ENCODE measurements at regions of chr16 and their contacts with region 1.

Region 1: GRCh38 chr16:23423496-23424049 is 29.4 kb downstream of the COG7 start:
- DNase-seq: peak; percentile 97
- H3K4me3 ChIP-seq: no peak overlapping the region
- H3K27ac ChIP-seq: peak overlapping the region; percentile 91
- H3K4me1 ChIP-seq: peaks cover 20% of the 10 kb centered on the region
- H3K27me3 ChIP-seq: no peaks in the 10 kb centered on the region
- CTCF ChIP-seq: no peak

Region 2: DNA sequence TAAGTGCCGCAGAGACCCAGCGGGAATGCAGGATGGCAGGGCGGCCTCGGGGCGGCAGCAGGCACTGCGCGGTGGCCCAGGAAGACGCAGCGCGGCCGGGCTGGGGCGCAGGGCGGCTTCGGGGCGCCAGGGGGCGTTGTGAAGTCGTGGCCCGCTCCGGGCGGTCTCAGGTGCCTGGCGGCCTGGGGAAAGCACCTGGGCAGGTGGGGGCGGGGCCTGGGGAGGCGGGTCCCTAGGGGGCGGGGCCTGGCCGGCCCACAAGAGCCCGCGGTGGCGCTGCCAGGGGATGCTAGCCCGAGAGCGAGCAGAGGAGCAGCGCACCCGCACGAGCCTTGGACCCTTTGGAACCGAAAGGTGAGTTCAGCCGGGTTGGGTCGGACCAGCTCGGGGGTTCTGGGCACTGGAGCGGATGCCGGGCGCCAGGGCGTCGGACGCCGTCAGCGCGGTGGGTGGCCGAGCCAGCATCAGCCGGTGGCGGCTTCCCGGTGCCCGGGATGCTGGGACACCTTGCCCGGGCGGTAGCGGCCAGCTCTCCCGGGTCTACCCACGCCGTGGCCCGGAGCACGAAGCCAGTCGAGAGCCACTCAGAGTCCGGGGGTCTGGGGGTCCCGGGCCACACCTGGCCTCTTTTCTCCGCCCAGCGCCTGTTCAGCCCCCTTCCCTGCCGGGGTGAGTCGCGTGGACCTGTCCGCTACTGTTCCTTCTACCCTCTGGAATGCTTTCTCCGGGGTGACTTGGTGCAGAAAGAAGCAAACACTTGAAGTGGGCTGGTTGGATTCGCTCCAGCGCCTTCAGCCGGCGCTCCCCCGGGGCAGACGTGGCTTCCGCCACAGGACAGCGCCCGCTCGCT is 240.9 kb before region 1 on chr16 and contains the start of gene SCNN1G:
- CTCF ChIA-PET with region 1: no interaction called
- dilution Hi-C with region 1: no loop called
- in situ Hi-C with region 1: no loop called
- intact Hi-C with region 1: loop called (anchors 2 kb)
- DNase-seq: peak; percentile 88
- H3K4me3 ChIP-seq: peak within 1 kb of the TSS; percentile 68 to 87 (median 69)
- H3K27ac ChIP-seq: no peak within 1 kb of the TSS
- H3K4me1 ChIP-seq: peaks cover 14% of the 10 kb centered on the region
- H3K27me3 ChIP-seq: no peaks in the 10 kb centered on the region
- CTCF ChIP-seq: peak; percentile 94 to 97
- total RNA-seq, gene SCNN1G: 1.2 to 4.7 TPM

Region 3: GRCh38 chr16:23280483-23280967 is 143.0 kb before region 1 on chr16:
- CTCF ChIA-PET with region 1: no interaction called
- dilution Hi-C with region 1: loop called (anchors 5 kb)
- in situ Hi-C with region 1: no loop called
- intact Hi-C with region 1: no loop called
- DNase-seq: peak; percentile 90
- H3K4me3 ChIP-seq: no peak overlapping the region
- H3K27ac ChIP-seq: peak overlapping the region; percentile 76
- H3K4me1 ChIP-seq: peaks cover 58% of the 10 kb centered on the region
- H3K27me3 ChIP-seq: no peaks in the 10 kb centered on the region
- CTCF ChIP-seq: no peak

Region 4: DNA sequence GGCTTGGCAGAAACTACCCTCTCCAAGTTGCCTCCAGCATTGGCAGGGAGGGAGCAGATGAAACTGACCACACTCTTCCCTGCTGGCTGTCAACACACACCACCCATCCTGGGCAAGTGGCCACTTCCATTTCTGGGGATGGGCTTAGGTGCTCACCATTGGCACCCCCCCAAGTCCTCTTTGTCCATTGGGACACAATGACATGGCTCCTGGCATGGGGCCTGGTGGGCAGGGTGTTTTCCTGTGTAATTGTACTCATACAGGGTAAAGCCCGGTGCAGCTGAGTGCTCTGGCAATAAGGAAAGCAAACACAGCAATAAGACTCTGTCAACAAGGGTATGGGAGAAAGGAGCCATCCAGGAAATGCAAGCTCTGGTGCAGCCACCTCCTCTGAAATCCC is 98.8 kb before region 1 on chr16:
- CTCF ChIA-PET with region 1: no interaction called
- dilution Hi-C with region 1: loop called (anchors 5 kb)
- in situ Hi-C with region 1: no loop called
- intact Hi-C with region 1: no loop called
- DNase-seq: no peak
- H3K4me3 ChIP-seq: no peak overlapping the region
- H3K27ac ChIP-seq: no peak overlapping the region
- H3K4me1 ChIP-seq: no peaks in the 10 kb centered on the region
- H3K27me3 ChIP-seq: no peaks in the 10 kb centered on the region
- CTCF ChIP-seq: no peak

Region 5: DNA sequence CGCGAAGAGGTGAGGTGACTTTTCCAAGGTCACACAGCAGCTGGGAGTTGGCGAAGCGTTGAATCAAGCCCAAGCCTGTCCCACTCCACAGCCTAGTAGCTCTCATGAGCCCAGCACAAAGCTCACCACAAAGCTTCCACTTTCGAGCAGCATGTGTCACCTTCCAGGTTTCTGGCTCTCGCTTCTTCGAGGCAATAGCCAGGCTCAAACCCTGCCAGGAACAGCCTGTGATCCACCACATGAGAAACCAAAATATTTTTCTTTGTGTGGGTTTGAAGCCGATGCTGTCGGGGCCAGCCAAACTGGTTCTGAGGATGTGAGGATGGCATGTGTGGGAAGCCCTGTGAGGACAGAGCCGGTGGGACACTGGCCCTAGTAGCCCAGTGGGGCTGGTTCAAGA is 38.7 kb before region 1 on chr16:
- CTCF ChIA-PET with region 1: no interaction called
- dilution Hi-C with region 1: loop called (anchors 5 kb)
- in situ Hi-C with region 1: no loop called
- intact Hi-C with region 1: no loop called
- DNase-seq: peak; percentile 96
- H3K4me3 ChIP-seq: no peak overlapping the region
- H3K27ac ChIP-seq: no peak overlapping the region
- H3K4me1 ChIP-seq: peaks cover 5% of the 10 kb centered on the region
- H3K27me3 ChIP-seq: no peaks in the 10 kb centered on the region
- CTCF ChIP-seq: no peak

Region 6: DNA sequence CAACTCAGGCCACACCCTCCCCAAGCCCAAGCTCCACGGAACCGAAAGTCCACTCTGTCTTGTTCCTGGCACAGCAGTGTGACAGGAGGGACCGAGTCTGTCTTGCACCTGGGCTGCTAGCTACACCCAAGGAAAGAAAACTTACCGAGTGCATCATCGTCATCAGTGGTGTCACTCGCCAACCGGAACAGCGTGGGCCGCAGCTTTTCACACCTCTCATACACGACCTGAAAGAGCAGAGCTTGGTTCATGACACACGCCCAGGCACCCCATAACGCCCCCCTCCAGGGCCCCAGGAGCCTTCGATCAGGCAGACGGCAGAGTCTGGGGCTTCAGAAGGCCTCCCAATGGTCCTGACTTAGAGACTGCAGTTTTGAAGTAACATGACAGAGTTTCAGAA is 59.2 kb after region 1 on chr16:
- CTCF ChIA-PET with region 1: no interaction called
- dilution Hi-C with region 1: no loop called
- in situ Hi-C with region 1: no loop called
- intact Hi-C with region 1: no loop called
- DNase-seq: no peak
- H3K4me3 ChIP-seq: no peak overlapping the region
- H3K27ac ChIP-seq: no peak overlapping the region
- H3K4me1 ChIP-seq: no peaks in the 10 kb centered on the region
- H3K27me3 ChIP-seq: no peaks in the 10 kb centered on the region
- CTCF ChIP-seq: no peak